Tibial artery (tissue), 4 donors: ENCODE measurements at regions of chr3 and their contacts with region 1.

Region 1: GRCh38 chr3:42425736-42426407 is 15.5 kb upstream of the LYZL4 start:
- DNase-seq: no peak
- H3K4me3 ChIP-seq: no peak overlapping the region
- H3K27ac ChIP-seq: no peak overlapping the region
- H3K4me1 ChIP-seq: no peaks in the 10 kb centered on the region
- H3K27me3 ChIP-seq: peaks cover 0 to 3% of the 10 kb centered on the region in 2 donors
- CTCF ChIP-seq: no peak

Region 2: DNA sequence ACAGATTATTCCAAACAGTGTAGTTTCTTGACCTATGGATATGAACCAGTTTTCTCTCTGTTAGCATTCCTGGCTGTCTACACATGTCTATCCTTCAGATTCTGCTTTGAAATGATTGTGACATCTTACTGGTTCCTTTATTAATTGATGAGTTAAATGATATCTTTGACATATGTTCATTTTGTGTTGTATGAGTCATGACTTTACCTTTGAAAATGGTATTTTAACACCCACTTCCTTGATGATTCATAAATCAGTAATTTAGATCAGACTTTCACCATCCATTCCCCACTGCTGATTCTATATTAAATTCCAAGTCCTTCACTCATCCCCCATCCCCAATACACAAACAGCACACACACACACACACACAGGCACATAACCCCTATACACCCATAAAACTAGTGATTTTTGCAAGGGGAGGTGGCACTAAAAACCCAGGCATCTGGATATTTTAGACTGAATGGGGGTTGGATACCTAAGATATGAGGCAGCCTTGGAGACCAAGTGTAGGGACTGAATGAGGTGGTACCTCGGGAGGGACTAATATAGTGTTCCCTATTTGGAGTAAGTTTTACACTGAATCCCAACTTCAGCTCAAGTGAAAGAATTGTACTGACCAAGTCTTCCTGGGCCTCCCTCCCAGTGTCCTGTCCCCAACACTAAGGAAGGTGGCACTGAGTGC is 169.6 kb before region 1 on chr3:
- intact Hi-C with region 1: loop called (anchors 10 kb)
- DNase-seq: no peak
- H3K4me3 ChIP-seq: no peak overlapping the region
- H3K27ac ChIP-seq: no peak overlapping the region
- H3K4me1 ChIP-seq: no peaks in the 10 kb centered on the region
- H3K27me3 ChIP-seq: peaks cover 0 to 44% of the 10 kb centered on the region in 2 donors
- CTCF ChIP-seq: no peak